ENCODE measurements at regions of chr7 and their contacts with region 1.

Region 1: GRCh38 chr7:73436031-73436828 is 2.7 kb downstream of the FZD9 start:
- DNase-seq: no peak
- H3K4me3 ChIP-seq: no peak overlapping the region
- H3K27ac ChIP-seq: no peak overlapping the region
- H3K4me1 ChIP-seq: peaks cover 8% of the 10 kb centered on the region
- H3K27me3 ChIP-seq: no peaks in the 10 kb centered on the region
- CTCF ChIP-seq: no peak
- POLR2A ChIP-seq: no peak

Region 2: DNA sequence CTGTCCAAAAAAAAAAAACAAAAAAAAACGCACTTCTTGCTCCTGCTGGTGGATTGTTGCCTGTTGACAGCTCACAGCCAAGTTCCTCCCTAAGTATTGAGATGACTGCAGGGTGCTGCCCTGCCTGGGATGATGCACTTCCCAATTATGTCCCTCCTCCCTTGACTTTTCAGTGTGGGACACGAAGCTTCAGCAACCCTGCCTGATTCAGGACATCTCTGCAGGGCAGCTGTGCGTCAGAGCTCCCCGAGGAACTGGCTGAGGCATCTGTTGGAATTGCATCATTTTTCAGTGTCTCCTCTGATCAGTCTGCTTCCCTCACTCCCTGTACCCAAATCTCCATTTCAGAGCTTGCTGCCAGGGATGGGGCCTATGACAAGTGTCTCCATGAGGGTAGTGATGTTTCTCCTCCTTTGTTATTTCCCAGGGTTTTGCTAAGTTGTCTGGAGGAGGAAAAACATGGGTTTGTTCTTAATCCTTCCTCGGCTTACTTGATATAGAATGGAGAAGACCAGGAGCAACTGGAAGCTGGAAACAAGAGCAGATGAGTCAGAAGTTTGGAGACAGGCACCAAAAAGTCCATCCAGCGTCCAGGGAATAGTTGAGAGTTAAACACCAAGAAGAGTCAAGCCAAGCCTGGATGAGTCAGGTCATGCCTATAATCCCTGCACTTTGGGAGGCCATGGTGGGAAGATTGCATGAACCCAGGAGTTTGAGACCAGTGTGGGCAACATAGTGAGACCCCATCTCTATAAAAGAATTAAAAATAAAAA is 1949.2 kb before region 1 on chr7:
- intact Hi-C with region 1: no loop called
- DNase-seq: peak in 1 of 2 donors; percentile 92
- H3K4me3 ChIP-seq: no peak overlapping the region
- H3K27ac ChIP-seq: no peak overlapping the region
- H3K4me1 ChIP-seq: no peaks in the 10 kb centered on the region
- H3K27me3 ChIP-seq: no peaks in the 10 kb centered on the region
- CTCF ChIP-seq: no peak
- POLR2A ChIP-seq: no peak

Region 3: GRCh38 chr7:73340514-73340913 is 95.7 kb before region 1 on chr7:
- intact Hi-C with region 1: no loop called
- DNase-seq: no peak
- H3K4me3 ChIP-seq: no peak overlapping the region
- H3K27ac ChIP-seq: no peak overlapping the region
- H3K4me1 ChIP-seq: peaks cover 14% of the 10 kb centered on the region
- H3K27me3 ChIP-seq: no peaks in the 10 kb centered on the region
- CTCF ChIP-seq: no peak
- POLR2A ChIP-seq: no peak

Region 4: GRCh38 chr7:73351447-73352167 is 84.6 kb before region 1 on chr7:
- intact Hi-C with region 1: loop called (anchors 5 kb)
- DNase-seq: no peak
- H3K4me3 ChIP-seq: no peak overlapping the region
- H3K27ac ChIP-seq: no peak overlapping the region
- H3K4me1 ChIP-seq: no peaks in the 10 kb centered on the region
- H3K27me3 ChIP-seq: no peaks in the 10 kb centered on the region
- CTCF ChIP-seq: no peak
- POLR2A ChIP-seq: no peak

Region 5: DNA sequence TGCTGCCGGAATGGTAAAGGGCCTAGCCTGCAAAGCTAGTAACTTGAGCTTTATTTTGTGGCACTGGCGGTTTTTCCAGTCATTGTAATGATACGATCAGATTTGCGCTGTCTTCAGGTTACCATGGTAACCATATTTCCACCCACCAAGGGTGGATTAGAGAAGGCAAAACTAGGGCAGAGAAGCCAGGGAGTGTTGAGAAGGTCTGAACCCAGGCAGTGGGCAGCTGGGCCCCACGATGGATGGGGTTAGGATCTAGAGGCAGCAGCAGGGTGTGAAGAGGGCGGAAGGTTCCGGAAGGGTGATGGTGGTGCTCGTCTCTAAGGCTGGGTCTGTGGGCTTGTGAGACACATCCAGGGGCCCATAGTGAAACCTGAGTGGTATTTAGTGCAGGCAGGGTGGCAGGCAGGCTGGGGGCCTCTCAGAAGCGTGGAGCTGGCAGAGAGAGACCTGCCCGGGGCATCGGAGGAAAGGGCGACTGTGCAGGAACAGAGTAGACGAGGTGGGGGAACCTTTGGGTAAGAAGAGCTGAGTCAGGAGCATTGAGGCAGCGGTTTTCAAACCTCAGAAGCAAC is 1133.4 kb after region 1 on chr7:
- intact Hi-C with region 1: no loop called
- DNase-seq: no peak
- H3K4me3 ChIP-seq: no peak overlapping the region
- H3K27ac ChIP-seq: no peak overlapping the region
- H3K4me1 ChIP-seq: peaks cover 14% of the 10 kb centered on the region
- H3K27me3 ChIP-seq: no peaks in the 10 kb centered on the region
- CTCF ChIP-seq: no peak
- POLR2A ChIP-seq: no peak